ENCODE measurements at regions of chr7 and their contacts with region 1.

Region 1: GRCh38 chr7:95469850-95470249 is 15.9 kb upstream of the ASB4 start:
- DNase-seq: no peak
- ATAC-seq: no peak
- H3K4me3 ChIP-seq: no peak overlapping the region
- H3K27ac ChIP-seq: peak overlapping the region in 1 of 10 donors; percentile 54
- H3K4me1 ChIP-seq: peaks cover 0 to 11% (median 6%) of the 10 kb centered on the region in 9 donors
- H3K27me3 ChIP-seq: no peaks in the 10 kb centered on the region
- CTCF ChIP-seq: no peak

Region 2: DNA sequence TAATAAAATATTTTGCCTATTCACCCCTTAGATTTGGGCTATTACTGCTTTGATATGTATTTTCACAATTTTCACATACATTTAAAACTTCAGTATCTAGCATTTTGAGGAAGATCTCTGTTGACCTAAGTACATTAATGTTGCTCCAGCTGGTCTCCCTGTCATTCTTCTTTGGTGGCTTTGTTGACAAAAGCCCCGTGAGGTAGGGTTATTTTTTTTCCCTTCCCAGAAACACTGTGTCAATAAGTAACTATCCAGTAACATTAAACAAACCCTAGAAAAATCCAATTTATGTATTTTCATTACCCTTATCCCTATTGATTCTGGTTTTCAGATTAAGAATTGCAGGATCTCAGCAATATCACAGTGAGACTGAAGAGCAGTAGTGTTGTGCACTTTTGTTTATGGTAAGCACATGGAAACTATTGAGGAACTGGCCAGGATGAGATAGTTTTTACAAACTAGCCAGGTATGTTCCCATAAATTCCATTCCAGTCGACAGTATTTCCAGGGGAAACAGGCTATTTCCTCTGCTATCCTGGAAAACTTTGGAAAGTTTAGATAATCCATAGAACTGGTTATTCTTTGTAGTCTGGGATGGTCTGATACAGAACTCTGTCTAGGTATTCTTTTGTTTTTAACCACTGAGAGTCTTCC is 343.7 kb before region 1 on chr7:
- intact Hi-C with region 1: no loop called
- DNase-seq: no peak
- ATAC-seq: no peak
- H3K4me3 ChIP-seq: no peak overlapping the region
- H3K27ac ChIP-seq: no peak overlapping the region
- H3K4me1 ChIP-seq: no peaks in the 10 kb centered on the region
- H3K27me3 ChIP-seq: no peaks in the 10 kb centered on the region
- CTCF ChIP-seq: no peak

Region 3: GRCh38 chr7:95342642-95343307 is 127.1 kb before region 1 on chr7:
- intact Hi-C with region 1: loop called in 1 of 10 experiments (anchors 10 kb)
- DNase-seq: no peak
- ATAC-seq: no peak
- H3K4me3 ChIP-seq: no peak overlapping the region
- H3K27ac ChIP-seq: no peak overlapping the region
- H3K4me1 ChIP-seq: no peaks in the 10 kb centered on the region
- H3K27me3 ChIP-seq: no peaks in the 10 kb centered on the region
- CTCF ChIP-seq: no peak

Region 4: GRCh38 chr7:95429241-95429990 is 40.4 kb before region 1 on chr7:
- intact Hi-C with region 1: no loop called
- DNase-seq: no peak
- ATAC-seq: no peak
- H3K4me3 ChIP-seq: no peak overlapping the region
- H3K27ac ChIP-seq: no peak overlapping the region
- H3K4me1 ChIP-seq: peaks cover 0 to 11% (median 6%) of the 10 kb centered on the region in 9 donors
- H3K27me3 ChIP-seq: no peaks in the 10 kb centered on the region
- CTCF ChIP-seq: no peak